Ascending aorta (tissue), 2 donors: ENCODE measurements at regions of chr15 and their contacts with region 1.

Region 1: DNA sequence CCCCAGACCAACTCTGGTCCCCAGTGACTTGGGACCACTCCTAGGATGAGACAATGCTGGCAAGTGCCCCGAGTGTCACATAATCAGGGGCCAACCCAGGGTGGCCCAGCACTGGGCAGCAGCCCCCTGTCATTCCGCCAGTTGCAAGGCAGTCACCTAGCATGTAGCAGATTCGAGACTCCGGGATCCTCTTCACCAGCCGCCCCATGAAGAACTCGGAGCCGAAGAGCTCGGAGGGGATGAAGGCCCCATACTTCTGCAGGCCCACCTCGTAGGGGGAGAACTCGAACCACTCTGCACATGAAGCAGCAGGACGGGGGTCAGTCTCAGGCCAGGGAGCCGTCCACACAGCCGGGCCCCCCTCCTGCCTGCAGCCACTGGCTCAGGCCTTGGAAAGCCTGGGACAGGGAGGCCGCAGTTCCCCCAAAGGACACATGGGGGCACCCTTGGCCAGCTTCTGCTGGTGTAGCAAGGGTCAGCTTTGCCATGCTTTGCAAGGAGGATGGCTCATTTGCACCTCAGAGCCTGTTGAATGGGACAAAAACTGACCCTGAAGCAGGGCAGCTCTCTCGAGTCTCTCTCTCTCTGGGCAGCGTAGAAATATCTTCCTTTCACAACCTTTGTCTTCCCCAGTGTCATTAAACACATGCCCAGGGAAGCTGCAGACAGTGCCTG is 17.0 kb upstream of the EHD4 start:
- DNase-seq: peak; percentile 45 to 88
- H3K4me3 ChIP-seq: no peak overlapping the region
- H3K27ac ChIP-seq: no peak overlapping the region
- H3K4me1 ChIP-seq: peaks cover 0 to 4% of the 10 kb centered on the region in 2 donors
- H3K27me3 ChIP-seq: no peaks in the 10 kb centered on the region
- CTCF ChIP-seq: peak; percentile 92 to 99 (median 95)

Region 2: DNA sequence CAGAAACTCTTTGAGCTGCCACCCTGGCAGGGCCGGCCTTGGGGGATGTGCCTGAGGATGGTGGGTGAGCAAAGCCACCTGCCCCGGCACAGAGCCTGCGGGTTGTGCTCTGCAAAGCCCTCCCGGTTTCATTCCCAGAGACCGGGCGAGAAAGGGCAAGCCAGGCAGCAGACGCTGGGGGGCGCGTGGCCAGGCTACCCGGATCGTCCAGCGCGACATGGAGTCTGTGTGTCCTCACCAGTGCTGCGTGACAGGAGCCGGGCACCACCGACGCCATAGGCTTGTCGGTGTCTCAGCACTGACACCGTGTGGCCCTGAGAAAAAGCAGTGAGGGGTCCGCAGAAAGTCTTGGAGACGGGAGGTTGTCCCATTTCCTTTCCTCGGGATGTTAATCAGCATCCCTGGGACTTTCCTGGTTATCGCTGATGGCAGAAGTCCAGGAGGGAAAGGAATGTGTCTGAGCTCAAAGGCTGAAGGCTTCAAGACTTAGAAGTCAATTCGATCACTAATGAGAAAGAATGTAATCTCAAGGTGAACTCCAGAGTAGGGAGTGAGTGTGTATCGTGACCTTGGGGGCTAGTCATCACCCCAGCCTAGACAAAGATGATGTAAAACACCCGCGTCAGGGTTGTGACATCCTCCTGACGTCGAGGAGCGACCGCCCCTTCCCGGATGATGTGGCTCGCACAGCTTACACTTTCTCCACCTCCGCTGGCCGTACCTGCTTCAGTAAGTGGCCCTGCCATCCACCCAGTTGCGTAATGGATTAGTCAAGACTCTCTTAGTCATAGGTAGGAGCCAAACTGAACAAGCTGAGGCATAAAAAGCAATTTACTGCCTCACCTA is 67.8 kb after region 1 on chr15:
- intact Hi-C with region 1: loop called (anchors 1 kb)
- DNase-seq: peak; percentile 25 to 75
- H3K4me3 ChIP-seq: peak overlapping the region in 1 of 2 donors; percentile 51
- H3K27ac ChIP-seq: no peak overlapping the region
- H3K4me1 ChIP-seq: no peaks in the 10 kb centered on the region
- H3K27me3 ChIP-seq: no peaks in the 10 kb centered on the region
- CTCF ChIP-seq: peak; percentile 57 to 69 (median 57)

Region 3: GRCh38 chr15:42084460-42085235 is 95.3 kb after region 1 on chr15:
- intact Hi-C with region 1: loop called (anchors 2 kb)
- DNase-seq: peak in 1 of 2 donors; percentile 76
- H3K4me3 ChIP-seq: no peak overlapping the region
- H3K27ac ChIP-seq: no peak overlapping the region
- H3K4me1 ChIP-seq: no peaks in the 10 kb centered on the region
- H3K27me3 ChIP-seq: no peaks in the 10 kb centered on the region
- CTCF ChIP-seq: peak; percentile 82 to 92 (median 92)

Region 4: DNA sequence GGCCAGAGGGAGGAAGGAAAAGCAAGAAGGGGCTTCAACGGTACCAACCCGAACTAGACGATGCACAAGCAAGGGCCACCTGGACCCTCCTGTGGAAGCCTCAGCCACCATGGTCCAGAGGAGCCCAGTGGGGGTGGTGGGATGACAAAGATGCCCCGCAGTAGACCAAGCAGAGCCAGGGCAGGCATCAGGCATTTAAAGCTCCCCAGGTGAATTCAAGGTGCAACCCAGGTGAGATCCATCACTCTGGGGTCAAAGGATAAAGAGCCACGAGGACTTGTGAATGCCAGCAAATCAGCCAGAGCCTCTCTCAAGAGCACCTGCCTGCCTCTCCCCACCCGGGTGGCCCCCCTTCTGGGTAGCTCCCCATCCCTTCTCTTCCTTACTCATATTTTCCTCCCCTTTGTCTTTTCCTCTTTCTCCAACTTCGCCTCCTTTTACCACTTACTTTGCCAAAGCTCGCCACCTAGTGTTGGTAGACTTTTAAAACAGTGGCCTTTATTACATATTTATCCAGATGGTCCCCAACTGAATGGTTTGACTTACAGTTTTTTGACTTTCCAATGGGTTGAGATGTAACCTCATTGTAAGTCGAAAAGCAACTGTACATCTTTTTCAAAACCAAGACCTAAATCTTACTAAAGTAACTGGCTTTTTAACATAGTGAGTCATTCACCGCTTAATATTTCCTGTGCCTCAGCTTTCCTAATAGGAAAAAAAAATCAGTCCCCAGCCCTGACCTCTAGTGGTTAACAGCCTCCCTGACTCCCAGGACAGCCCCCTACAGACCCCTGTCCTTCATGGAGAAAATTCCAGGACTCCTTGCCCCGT is 148.2 kb after region 1 on chr15:
- intact Hi-C with region 1: loop called (anchors 2 kb)
- DNase-seq: peak in 1 of 2 donors; percentile 61
- H3K4me3 ChIP-seq: no peak overlapping the region
- H3K27ac ChIP-seq: no peak overlapping the region
- H3K4me1 ChIP-seq: no peaks in the 10 kb centered on the region
- H3K27me3 ChIP-seq: no peaks in the 10 kb centered on the region
- CTCF ChIP-seq: peak; percentile 18 to 55 (median 43)